Esophagus squamous epithelium (tissue), 5 donors: ENCODE measurements at regions of chr1 and their contacts with region 1.

Region 1: GRCh38 chr1:202852163-202852904 is 36.6 kb downstream of the RABIF start:
- DNase-seq: no peak
- H3K4me3 ChIP-seq: no peak overlapping the region
- H3K27ac ChIP-seq: no peak overlapping the region
- H3K4me1 ChIP-seq: peaks cover 0 to 21% (median 0%) of the 10 kb centered on the region in 3 donors
- H3K27me3 ChIP-seq: no peaks in the 10 kb centered on the region
- CTCF ChIP-seq: peak in 5 of 6 experiments; percentile 37 to 70 (median 47)
- POLR2A ChIP-seq: no peak

Region 2: DNA sequence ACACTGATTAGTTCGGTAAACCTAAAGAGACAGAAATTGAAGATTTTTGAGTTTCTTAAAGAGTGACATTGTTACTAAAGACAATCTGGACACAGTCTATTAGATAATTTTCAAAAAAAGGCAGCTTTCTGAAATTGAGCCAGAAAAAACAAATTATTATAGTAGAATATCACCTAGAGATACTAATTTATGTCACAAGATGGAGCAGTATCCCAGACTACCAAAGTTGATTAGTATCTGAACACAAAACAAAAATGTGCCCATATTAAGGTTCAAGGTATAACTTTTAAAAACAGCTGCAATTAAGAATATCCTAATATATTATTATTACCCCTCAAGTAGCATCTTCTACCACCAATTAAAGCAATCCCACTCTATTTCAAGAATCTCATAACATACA is 101.6 kb before region 1 on chr1:
- intact Hi-C with region 1: loop called (anchors 10 kb)
- DNase-seq: no peak
- H3K4me3 ChIP-seq: no peak overlapping the region
- H3K27ac ChIP-seq: no peak overlapping the region
- H3K4me1 ChIP-seq: no peaks in the 10 kb centered on the region
- H3K27me3 ChIP-seq: no peaks in the 10 kb centered on the region
- CTCF ChIP-seq: peak in 2 of 6 experiments; percentile 7 to 24
- POLR2A ChIP-seq: no peak

Region 3: GRCh38 chr1:202788800-202789199 is 63.5 kb before region 1 on chr1:
- intact Hi-C with region 1: no loop called
- DNase-seq: no peak
- H3K4me3 ChIP-seq: no peak overlapping the region
- H3K27ac ChIP-seq: no peak overlapping the region
- H3K4me1 ChIP-seq: peaks cover 0 to 29% (median 0%) of the 10 kb centered on the region in 3 donors
- H3K27me3 ChIP-seq: no peaks in the 10 kb centered on the region
- CTCF ChIP-seq: no peak
- POLR2A ChIP-seq: no peak